PC-9 (cell line): ENCODE measurements at regions of chr16 and their contacts with region 1.

Region 1: GRCh38 chr16:66406534-66407221 is 20.4 kb upstream of the BEAN1 start:
- DNase-seq: peak; percentile 64 to 79
- H3K4me3 ChIP-seq: peak overlapping the region; percentile 63; the same call in 1 of the 2 replicates
- H3K27ac ChIP-seq: no peak overlapping the region
- H3K4me1 ChIP-seq: peaks cover 36% of the 10 kb centered on the region
- H3K27me3 ChIP-seq: no peaks in the 10 kb centered on the region
- CTCF ChIP-seq: peak; percentile 95

Region 2: DNA sequence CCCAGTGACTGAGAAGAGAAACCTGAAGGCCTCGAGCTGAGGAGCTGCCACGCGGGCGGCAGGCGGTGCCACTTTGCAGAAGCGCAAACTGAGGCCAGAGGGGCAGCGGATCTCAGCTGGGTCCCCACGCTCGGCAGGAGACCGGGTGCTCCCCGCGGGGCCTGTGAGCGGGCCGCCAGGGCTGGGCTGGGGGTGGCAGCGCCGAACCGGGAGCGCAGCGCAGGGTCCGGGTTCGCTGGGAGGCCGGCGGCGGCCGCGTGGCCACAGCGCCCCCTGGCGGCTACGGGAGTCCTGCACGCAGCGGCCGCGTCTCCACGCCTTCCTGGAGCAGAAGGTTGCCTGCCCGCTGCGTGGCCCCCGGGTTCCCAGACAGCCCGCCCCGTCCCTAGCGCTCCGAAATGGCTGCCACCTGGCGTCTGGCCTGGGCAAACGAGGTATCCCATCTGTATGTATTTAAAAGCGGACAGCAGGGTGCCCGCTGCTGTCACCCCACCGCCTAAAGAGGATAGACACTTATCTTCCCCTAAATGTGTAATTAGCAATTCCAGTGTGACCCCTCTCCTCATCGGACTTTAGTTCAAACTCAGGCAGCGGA is 136.2 kb before region 1 on chr16:
- CTCF ChIA-PET with region 1: no interaction called
- POLR2A ChIA-PET with region 1: no interaction called
- intact Hi-C with region 1: loop called (anchors 10 kb)
- DNase-seq: peak in 1 of 2 experiments; percentile 54
- H3K4me3 ChIP-seq: peak overlapping the region; percentile 46; the same call in 1 of the 2 replicates
- H3K27ac ChIP-seq: no peak overlapping the region
- H3K4me1 ChIP-seq: peaks cover 28% of the 10 kb centered on the region
- H3K27me3 ChIP-seq: no peaks in the 10 kb centered on the region
- CTCF ChIP-seq: peak; percentile 81

Region 3: GRCh38 chr16:66357153-66357928 is 49.3 kb before region 1 on chr16:
- CTCF ChIA-PET with region 1: interaction called, 11 read pairs
- POLR2A ChIA-PET with region 1: no interaction called
- intact Hi-C with region 1: loop called (anchors 2 kb)
- DNase-seq: peak; percentile 59 to 68
- H3K4me3 ChIP-seq: no peak overlapping the region
- H3K27ac ChIP-seq: no peak overlapping the region
- H3K4me1 ChIP-seq: peaks cover 36% of the 10 kb centered on the region
- H3K27me3 ChIP-seq: no peaks in the 10 kb centered on the region
- CTCF ChIP-seq: peak; percentile 85

Region 4: GRCh38 chr16:66382171-66382965 is 24.3 kb before region 1 on chr16:
- CTCF ChIA-PET with region 1: interaction called, 3 read pairs
- POLR2A ChIA-PET with region 1: no interaction called
- intact Hi-C with region 1: loop called (anchors 2 kb)
- DNase-seq: peak; percentile 68 to 97
- H3K4me3 ChIP-seq: peak overlapping the region; percentile 23; the same call in 1 of the 2 replicates
- H3K27ac ChIP-seq: peak overlapping the region; percentile 96
- H3K4me1 ChIP-seq: peaks cover 68% of the 10 kb centered on the region
- H3K27me3 ChIP-seq: no peaks in the 10 kb centered on the region
- CTCF ChIP-seq: 0 out of 2 replicates have a peak, but pooled peaks have one; percentile 15

Region 5: GRCh38 chr16:66580605-66581209 is 174.0 kb after region 1 on chr16:
- CTCF ChIA-PET with region 1: no interaction called
- POLR2A ChIA-PET with region 1: interaction called, 3 read pairs
- intact Hi-C with region 1: loop called (anchors 5 kb)
- DNase-seq: peak; percentile 25 to 75
- H3K4me3 ChIP-seq: no peak overlapping the region
- H3K27ac ChIP-seq: no peak overlapping the region
- H3K4me1 ChIP-seq: peaks cover 22% of the 10 kb centered on the region
- H3K27me3 ChIP-seq: no peaks in the 10 kb centered on the region
- CTCF ChIP-seq: no peak

Region 6: GRCh38 chr16:66872943-66873684 is 466.4 kb after region 1 on chr16:
- CTCF ChIA-PET with region 1: interaction called, 18 read pairs
- POLR2A ChIA-PET with region 1: no interaction called
- intact Hi-C with region 1: no loop called
- DNase-seq: peak; percentile 90 to 93
- H3K4me3 ChIP-seq: peak overlapping the region; percentile 64
- H3K27ac ChIP-seq: peak overlapping the region; percentile 42
- H3K4me1 ChIP-seq: peaks cover 7% of the 10 kb centered on the region
- H3K27me3 ChIP-seq: no peaks in the 10 kb centered on the region
- CTCF ChIP-seq: peak; percentile 91

Region 7: DNA sequence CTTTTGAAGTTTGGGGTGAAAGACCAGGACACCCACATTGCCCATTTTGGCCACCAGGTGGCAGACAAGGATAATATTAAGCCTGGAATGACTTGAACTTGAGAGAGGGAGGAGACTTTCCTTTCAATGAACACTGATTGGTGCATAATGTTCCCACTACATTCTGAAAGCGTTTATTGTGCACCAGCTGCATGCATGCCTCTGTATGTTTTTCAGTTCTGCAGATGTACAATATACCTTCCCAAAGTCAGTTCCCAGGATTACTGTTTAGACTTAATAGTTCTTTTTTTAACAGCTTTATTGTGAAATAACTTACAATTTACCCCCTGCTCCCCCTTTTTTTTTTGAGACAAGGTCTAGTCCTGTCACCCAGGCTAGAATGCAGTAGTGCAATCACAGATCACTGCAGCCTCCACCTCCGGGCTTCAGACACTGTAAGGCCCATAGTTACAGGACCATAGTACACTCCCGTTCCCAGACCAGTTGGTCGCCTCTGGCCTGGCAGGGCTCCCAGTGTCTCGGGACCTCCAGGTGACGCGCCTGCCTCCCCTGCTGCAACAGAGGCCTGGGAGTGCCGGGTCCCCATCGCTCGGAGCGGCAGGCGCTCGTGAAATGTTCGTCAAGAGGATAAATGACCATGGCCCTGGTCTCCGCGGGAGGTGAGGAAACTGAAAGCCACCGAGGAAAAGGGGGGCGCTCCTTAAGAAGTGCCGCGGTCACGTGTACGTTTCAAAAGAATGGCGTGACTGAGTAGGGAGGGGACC is 540.8 kb after region 1 on chr16:
- CTCF ChIA-PET with region 1: no interaction called
- POLR2A ChIA-PET with region 1: no interaction called
- intact Hi-C with region 1: loop called (anchors 5 kb)
- DNase-seq: peak; percentile 72 to 80
- H3K4me3 ChIP-seq: peak overlapping the region; percentile 66
- H3K27ac ChIP-seq: no peak overlapping the region
- H3K4me1 ChIP-seq: no peaks in the 10 kb centered on the region
- H3K27me3 ChIP-seq: no peaks in the 10 kb centered on the region
- CTCF ChIP-seq: peak; percentile 94